Posterior cingulate gyrus (tissue), 11 donors: ENCODE measurements at regions of chr19 and their contacts with region 1.

Region 1: GRCh38 chr19:6297202-6297601 is 17.4 kb upstream of the MLLT1 start:
- DNase-seq: no peak

Region 2: GRCh38 chr19:6218491-6219162 is 78.6 kb before region 1 on chr19:
- intact Hi-C with region 1: loop called (anchors 1 kb)
- DNase-seq: peak; percentile 69 to 98 (median 93)

Region 3: DNA sequence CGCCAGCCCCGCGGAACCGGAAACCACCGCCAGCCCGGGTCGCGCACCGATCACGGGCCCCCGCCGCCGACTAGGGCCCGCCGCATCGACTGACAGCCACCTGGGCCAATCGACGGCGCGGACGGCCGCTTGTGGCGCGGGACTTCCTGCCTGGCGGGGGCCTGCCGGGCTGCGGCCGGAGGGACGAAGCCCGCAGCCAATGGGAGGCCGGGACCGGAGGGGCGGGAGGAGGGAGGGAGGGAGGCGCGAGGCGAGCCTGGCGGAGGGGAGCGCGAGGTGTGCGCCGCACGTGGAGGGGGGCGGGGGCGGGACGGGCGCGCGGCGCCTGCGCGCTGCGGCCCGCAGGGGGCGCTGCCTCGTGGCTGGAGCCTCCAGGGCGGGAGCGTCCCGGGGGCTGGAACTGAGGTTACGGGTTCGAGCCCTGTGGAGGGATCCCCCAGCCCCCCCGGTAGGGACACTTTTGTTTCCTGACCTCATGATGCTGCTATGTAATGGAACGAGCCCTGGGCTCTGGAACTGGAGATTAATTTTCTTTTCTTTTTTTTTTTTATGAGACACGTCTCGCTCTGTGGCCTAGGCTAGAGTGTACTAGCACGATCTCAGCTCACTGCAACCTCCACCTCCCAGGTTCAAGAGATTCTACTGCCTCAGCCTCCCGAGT is 17.1 kb before region 1 on chr19 and contains the start of gene MLLT1:
- intact Hi-C with region 1: no loop called
- DNase-seq: peak; percentile 98 to 100 (median 99)